Panc1 (cell line): ENCODE measurements at regions of chr12 and their contacts with region 1.

Region 1: DNA sequence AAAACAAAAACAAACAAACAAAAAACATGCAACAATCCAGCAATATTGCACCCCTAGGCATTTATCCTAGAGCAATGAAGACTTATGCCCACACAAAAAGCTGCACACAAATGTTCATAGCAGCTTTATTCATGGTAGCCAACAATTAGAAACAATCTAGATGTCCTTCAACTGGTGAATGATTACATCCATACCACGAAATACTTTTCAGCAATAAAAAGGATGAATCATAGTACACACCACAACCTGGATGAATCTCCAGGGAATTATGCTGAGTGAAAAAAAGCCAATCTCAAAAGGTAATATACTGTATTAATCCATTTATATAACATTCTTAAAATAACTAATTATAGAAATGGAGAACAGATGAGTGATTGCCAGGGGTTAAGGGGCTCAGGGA is 14.5 kb upstream of the GPR162 start:
- DNase-seq: no peak
- ATAC-seq: no peak
- H3K4me3 ChIP-seq: no peak overlapping the region
- H3K27ac ChIP-seq: no peak overlapping the region
- H3K4me1 ChIP-seq: no peaks in the 10 kb centered on the region
- H3K27me3 ChIP-seq: no peaks in the 10 kb centered on the region
- CTCF ChIP-seq: no peak

Region 2: GRCh38 chr12:6607751-6608591 is 199.2 kb before region 1 on chr12:
- CTCF ChIA-PET with region 1: no interaction called
- POLR2A ChIA-PET with region 1: interaction called, 14 read pairs
- in situ Hi-C with region 1: no loop called
- intact Hi-C with region 1: no loop called
- DNase-seq: no peak
- ATAC-seq: peak; percentile 14
- H3K4me3 ChIP-seq: peak overlapping the region in 1 of 2 experiments; percentile 23; a peak in 1 of 4 replicates
- H3K27ac ChIP-seq: peak overlapping the region; percentile 63
- H3K4me1 ChIP-seq: peaks cover 17% of the 10 kb centered on the region
- H3K27me3 ChIP-seq: no peaks in the 10 kb centered on the region
- CTCF ChIP-seq: no peak